ENCODE measurements at regions of chr2 and their contacts with region 1.

Region 1: GRCh38 chr2:42928692-42929545 is 136.5 kb upstream of the HAAO start:
- DNase-seq: peak; percentile 69 to 87 (median 70)
- ATAC-seq: peak; percentile 79
- H3K4me3 ChIP-seq: no peak overlapping the region
- H3K27ac ChIP-seq: peak overlapping the region; percentile 91
- H3K4me1 ChIP-seq: peaks cover 69 to 76% of the 10 kb centered on the region in 2 experiments
- H3K27me3 ChIP-seq: no peaks in the 10 kb centered on the region
- CTCF ChIP-seq: peak; percentile 75 to 81 (median 80)
- EP300 ChIP-seq: peak; percentile 33; the same call in 1 of the 2 replicates
- POLR2A ChIP-seq: no peak
- RAD21 ChIP-seq: peak in 1 of 2 experiments; percentile 23; a peak in 2 of 4 replicates

Region 2: DNA sequence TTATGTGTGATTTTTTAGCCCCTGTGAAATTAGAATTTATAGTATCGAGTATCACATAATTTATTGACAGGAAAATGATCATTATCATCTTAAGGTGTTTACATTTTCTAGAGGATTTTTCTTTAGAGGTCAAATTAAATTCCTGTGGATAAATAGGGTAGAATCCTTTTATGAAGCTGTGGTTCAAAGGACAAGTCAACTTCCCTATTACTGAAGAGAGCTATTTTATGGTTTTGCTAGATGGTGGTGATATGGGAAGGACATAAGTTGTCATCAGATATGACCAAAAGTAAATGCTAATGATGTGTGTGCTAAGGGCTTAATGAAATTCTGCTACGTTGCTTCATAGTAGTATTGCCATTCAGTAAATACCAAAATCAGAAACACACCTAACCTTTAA is 679.6 kb before region 1 on chr2:
- CTCF ChIA-PET with region 1: no interaction called
- POLR2A ChIA-PET with region 1: no interaction called
- in situ Hi-C with region 1: no loop called
- intact Hi-C with region 1: no loop called
- DNase-seq: no peak
- ATAC-seq: no peak
- H3K4me3 ChIP-seq: no peak overlapping the region
- H3K27ac ChIP-seq: no peak overlapping the region
- H3K4me1 ChIP-seq: no peaks in the 10 kb centered on the region; a peak in 1 of 5 replicates
- H3K27me3 ChIP-seq: no peaks in the 10 kb centered on the region
- CTCF ChIP-seq: no peak
- EP300 ChIP-seq: no peak
- POLR2A ChIP-seq: no peak
- RAD21 ChIP-seq: no peak

Region 3: DNA sequence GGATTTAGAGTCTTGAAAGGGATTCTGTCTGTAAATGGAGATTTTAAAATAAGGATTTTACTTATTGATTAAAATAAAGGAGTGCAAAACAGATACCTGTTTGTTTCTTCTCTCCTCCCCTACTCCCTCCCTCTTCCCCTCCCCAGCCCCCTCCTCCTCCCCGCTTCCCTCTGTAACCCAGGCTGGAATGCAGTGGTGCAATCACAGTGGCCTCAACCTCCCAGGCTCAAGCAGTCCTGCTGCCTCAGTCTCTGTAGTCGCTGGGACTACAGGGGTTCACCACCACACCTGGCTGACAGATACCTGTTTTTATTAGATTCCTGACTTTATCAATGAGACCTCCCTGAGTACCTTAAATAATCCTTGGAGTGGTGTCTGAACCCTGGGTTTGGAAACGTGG is 222.1 kb before region 1 on chr2:
- CTCF ChIA-PET with region 1: no interaction called
- POLR2A ChIA-PET with region 1: no interaction called
- in situ Hi-C with region 1: no loop called
- intact Hi-C with region 1: no loop called
- DNase-seq: no peak
- ATAC-seq: no peak
- H3K4me3 ChIP-seq: no peak overlapping the region
- H3K27ac ChIP-seq: no peak overlapping the region
- H3K4me1 ChIP-seq: no peaks in the 10 kb centered on the region
- H3K27me3 ChIP-seq: no peaks in the 10 kb centered on the region
- CTCF ChIP-seq: no peak
- EP300 ChIP-seq: no peak
- POLR2A ChIP-seq: no peak
- RAD21 ChIP-seq: no peak

Region 4: DNA sequence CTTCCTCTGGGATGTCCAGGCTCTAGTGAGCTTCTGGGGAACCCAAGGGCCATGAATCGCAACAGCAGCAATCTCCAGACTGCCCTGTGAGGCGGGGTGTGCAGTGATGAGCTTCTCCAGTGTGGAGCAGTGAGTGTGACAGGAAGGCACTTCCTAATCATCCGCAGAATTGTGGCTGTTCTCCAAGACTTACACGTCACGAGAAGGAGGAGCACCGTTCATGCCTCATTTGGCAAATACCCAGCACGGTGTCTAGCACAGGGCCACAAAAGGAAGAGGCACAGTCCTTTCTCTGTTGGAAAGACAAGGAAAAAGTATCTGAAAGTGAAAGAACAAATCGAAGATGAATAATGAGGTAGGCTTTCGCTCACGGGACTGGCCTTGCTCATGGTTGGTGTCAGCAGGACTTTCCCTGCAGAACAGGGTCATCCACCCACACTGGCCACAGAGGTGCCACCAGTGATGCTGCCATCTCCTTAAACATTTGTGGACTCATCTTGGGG is 11.4 kb before region 1 on chr2:
- CTCF ChIA-PET with region 1: no interaction called
- POLR2A ChIA-PET with region 1: interaction called, 11 read pairs
- in situ Hi-C with region 1: no loop called
- intact Hi-C with region 1: no loop called
- DNase-seq: peak in 2 of 4 experiments; percentile 46 to 81
- ATAC-seq: peak; percentile 73
- H3K4me3 ChIP-seq: no peak overlapping the region
- H3K27ac ChIP-seq: peak overlapping the region; percentile 40; the same call in 1 of the 3 replicates
- H3K4me1 ChIP-seq: peaks cover 21 to 43% of the 10 kb centered on the region in 2 experiments
- H3K27me3 ChIP-seq: no peaks in the 10 kb centered on the region
- CTCF ChIP-seq: no peak
- EP300 ChIP-seq: no peak
- POLR2A ChIP-seq: no peak
- RAD21 ChIP-seq: no peak

Region 5: DNA sequence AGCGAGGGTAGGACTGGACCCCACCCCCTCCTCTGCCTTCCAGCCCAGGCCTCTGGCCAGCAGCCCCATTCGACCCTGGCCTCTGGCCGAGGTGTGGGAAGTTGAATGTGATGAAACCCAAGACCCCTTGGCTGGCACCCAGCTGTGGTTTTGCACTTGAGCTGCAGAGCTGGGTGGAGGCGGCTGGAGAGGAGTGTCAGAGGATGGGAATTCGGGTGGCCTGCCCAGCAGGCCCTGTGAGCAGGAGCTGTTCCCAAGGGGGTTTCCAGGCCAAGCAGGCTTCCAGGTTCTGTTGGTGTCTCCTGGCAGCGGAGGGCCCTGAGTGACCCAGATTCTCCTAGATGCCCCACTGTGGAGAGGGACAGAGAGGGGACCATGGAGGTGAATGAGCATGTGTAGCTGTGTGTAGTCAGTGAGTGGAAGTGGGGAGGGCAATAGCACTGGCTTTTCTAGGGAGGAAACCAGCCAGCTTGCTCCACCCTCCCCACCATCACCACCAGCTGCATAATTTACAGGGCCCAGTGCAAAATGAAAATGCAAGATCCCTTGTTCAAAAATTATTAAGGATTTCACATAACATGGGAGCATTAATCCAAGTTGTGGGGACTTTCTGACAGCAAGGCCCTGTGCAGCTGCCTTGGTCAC is 35.6 kb after region 1 on chr2:
- CTCF ChIA-PET with region 1: no interaction called
- POLR2A ChIA-PET with region 1: interaction called, 3 read pairs
- in situ Hi-C with region 1: no loop called
- intact Hi-C with region 1: loop called (anchors 1 kb)
- DNase-seq: no peak
- ATAC-seq: no peak
- H3K4me3 ChIP-seq: no peak overlapping the region
- H3K27ac ChIP-seq: no peak overlapping the region
- H3K4me1 ChIP-seq: peaks cover 22 to 30% of the 10 kb centered on the region in 2 experiments
- H3K27me3 ChIP-seq: no peaks in the 10 kb centered on the region
- CTCF ChIP-seq: no peak
- EP300 ChIP-seq: no peak
- POLR2A ChIP-seq: no peak
- RAD21 ChIP-seq: no peak

Region 6: GRCh38 chr2:43041661-43042360 is 112.9 kb after region 1 on chr2:
- CTCF ChIA-PET with region 1: no interaction called
- POLR2A ChIA-PET with region 1: no interaction called
- in situ Hi-C with region 1: no loop called
- intact Hi-C with region 1: no loop called
- DNase-seq: peak; percentile 73 to 91 (median 83)
- ATAC-seq: peak; percentile 81
- H3K4me3 ChIP-seq: no peak overlapping the region
- H3K27ac ChIP-seq: peak overlapping the region; percentile 62; the same call in 2 of the 3 replicates
- H3K4me1 ChIP-seq: peaks cover 56 to 59% of the 10 kb centered on the region in 2 experiments
- H3K27me3 ChIP-seq: no peaks in the 10 kb centered on the region
- CTCF ChIP-seq: no peak
- EP300 ChIP-seq: peak; percentile 76
- POLR2A ChIP-seq: no peak
- RAD21 ChIP-seq: peak in 1 of 2 experiments; percentile 8; a peak in 1 of 4 replicates

Region 7: DNA sequence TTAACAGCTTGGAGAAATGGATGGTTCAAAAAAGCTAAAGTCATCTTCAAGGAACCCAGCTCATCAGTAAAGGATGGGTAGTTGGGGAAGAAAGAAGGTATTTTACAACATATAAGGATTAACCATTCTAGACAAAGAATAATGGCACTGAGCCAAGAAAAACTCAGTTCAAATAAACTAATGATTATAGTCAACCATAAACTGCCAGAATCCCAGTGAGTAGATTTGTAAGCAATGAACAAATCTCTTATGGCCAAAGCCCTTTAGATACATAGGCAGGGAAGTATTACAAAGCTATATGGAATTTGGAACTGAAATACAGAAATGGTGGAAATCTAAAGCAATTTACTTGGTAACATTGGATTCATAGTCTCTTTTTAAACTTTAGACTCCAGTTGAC is 389.9 kb after region 1 on chr2:
- CTCF ChIA-PET with region 1: no interaction called
- POLR2A ChIA-PET with region 1: no interaction called
- in situ Hi-C with region 1: no loop called
- intact Hi-C with region 1: no loop called
- DNase-seq: no peak
- ATAC-seq: no peak
- H3K4me3 ChIP-seq: no peak overlapping the region
- H3K27ac ChIP-seq: no peak overlapping the region
- H3K4me1 ChIP-seq: no peaks in the 10 kb centered on the region
- H3K27me3 ChIP-seq: no peaks in the 10 kb centered on the region
- CTCF ChIP-seq: no peak
- EP300 ChIP-seq: no peak
- POLR2A ChIP-seq: no peak
- RAD21 ChIP-seq: no peak